WTC11 (cell line): ENCODE measurements at regions of chr14 and their contacts with region 1.

Region 1: GRCh38 chr14:25400607-25401206 is 350.8 kb upstream of the STXBP6 start:
- DNase-seq: peak; percentile 49
- ATAC-seq: peak; percentile 59
- H3K4me3 Mint-ChIP-seq: no peak overlapping the region
- H3K27ac Mint-ChIP-seq: no peak overlapping the region
- H3K4me1 Mint-ChIP-seq: peaks cover 6% of the 10 kb centered on the region
- H3K27me3 Mint-ChIP-seq: no peaks in the 10 kb centered on the region
- CTCF ChIP-seq: peak; percentile 58

Region 2: DNA sequence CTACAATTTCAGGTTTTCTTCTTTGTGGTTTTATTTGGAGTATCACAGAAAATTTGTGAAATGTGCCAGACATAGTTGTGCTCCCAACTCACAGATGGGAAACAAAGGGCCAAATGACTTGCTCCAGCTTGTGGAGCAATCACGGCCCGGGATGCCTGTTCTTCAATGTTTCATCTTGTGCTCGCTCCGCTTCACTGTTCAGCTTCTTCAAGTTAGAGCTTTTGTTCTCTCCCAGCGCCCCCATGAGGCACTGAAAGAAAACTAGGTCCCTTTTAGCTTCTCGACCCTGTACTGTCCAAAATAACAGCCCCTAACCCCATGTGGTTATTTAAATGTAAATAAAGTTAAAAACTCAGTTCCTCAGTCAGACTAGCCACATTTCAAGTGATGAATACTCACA is 162.9 kb before region 1 on chr14:
- CTCF ChIA-PET with region 1: interaction called, 13 read pairs
- POLR2A ChIA-PET with region 1: no interaction called
- DNase-seq: peak; percentile 53
- ATAC-seq: peak; percentile 98
- H3K4me3 Mint-ChIP-seq: peak overlapping the region; percentile 33
- H3K27ac Mint-ChIP-seq: no peak overlapping the region
- H3K4me1 Mint-ChIP-seq: peaks cover 28% of the 10 kb centered on the region
- H3K27me3 Mint-ChIP-seq: peaks cover 4% of the 10 kb centered on the region; the same call in 1 of the 2 replicates
- CTCF ChIP-seq: no peak

Region 3: GRCh38 chr14:25308244-25308643 is 92.5 kb before region 1 on chr14:
- CTCF ChIA-PET with region 1: interaction called, 36 read pairs
- POLR2A ChIA-PET with region 1: no interaction called
- DNase-seq: peak; percentile 61
- ATAC-seq: peak; percentile 99
- H3K4me3 Mint-ChIP-seq: no peak overlapping the region
- H3K27ac Mint-ChIP-seq: no peak overlapping the region
- H3K4me1 Mint-ChIP-seq: no peaks in the 10 kb centered on the region
- H3K27me3 Mint-ChIP-seq: no peaks in the 10 kb centered on the region; the same call in 1 of the 2 replicates
- CTCF ChIP-seq: no peak

Region 4: DNA sequence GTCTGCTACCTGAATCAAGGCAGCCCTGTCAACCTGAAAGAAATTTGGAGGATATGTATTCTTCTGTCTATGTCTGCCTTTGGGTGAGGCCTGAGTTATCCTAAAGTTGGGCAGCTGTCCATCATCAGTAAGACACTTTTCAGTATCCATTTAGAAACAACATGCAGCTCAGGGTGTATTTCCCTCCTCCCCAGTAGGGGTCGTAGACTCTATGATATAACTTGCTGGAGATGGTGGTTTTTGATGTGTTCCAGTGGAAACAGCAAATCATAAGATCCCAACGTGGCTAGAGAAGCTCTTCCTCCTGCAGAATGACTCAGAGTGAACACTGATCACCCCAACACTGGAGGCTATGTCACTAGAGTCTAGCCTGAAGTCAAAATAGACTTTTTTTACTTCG is 19.2 kb before region 1 on chr14:
- CTCF ChIA-PET with region 1: interaction called, 16 read pairs
- POLR2A ChIA-PET with region 1: no interaction called
- DNase-seq: no peak
- ATAC-seq: peak; percentile 56
- H3K4me3 Mint-ChIP-seq: no peak overlapping the region
- H3K27ac Mint-ChIP-seq: no peak overlapping the region
- H3K4me1 Mint-ChIP-seq: peaks cover 9% of the 10 kb centered on the region
- H3K27me3 Mint-ChIP-seq: no peaks in the 10 kb centered on the region
- CTCF ChIP-seq: no peak

Region 5: GRCh38 chr14:25411781-25412757 is 11.4 kb after region 1 on chr14:
- CTCF ChIA-PET with region 1: interaction called, 32 read pairs
- POLR2A ChIA-PET with region 1: no interaction called
- DNase-seq: peak; percentile 50
- ATAC-seq: peak; percentile 96
- H3K4me3 Mint-ChIP-seq: no peak overlapping the region
- H3K27ac Mint-ChIP-seq: no peak overlapping the region
- H3K4me1 Mint-ChIP-seq: peaks cover 2% of the 10 kb centered on the region; the same call in 1 of the 2 replicates
- H3K27me3 Mint-ChIP-seq: peaks cover 3% of the 10 kb centered on the region; the same call in 1 of the 2 replicates
- CTCF ChIP-seq: no peak; the same call in 1 of the 2 replicates